B cell (primary cell): ENCODE measurements at regions of chr20 and their contacts with region 1.

Region 1: DNA sequence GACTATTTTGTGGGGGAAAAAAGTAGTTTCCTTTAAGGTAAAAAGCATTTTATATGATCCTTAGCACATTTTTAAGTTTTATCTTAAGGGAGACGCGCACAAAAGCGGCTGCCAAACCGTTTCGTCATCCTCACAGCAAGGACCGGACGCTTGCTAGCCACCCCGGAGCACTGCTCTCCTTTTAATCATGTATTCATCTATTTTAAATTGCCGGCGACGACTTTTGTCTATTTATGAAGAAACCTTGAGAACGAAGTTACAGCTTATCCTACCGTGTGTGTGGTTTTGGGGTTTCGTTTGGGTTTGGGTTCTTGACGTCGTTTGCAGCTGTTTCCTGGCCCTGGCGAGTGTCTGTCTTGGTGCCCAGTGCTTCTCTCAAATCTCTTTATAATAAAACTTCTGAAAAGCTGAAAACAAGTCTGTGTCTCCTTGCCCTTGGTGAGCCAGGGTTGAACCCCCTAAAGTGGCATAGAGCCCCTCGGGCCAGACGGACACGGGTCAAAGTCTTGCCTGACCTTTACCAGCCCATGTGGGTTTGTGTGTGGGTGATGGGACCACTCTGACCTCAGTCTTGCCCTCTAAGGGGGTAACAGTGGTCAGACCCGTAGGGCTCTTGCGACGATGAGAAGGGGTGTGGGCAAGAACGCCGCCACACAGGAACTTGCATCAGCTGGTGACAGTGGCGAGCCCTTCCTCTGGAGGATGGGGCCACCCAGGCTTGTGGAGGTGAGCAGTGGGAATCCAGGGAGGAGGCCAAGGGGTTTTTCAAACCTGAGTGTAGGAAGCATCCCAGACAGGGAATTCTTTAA is 117.6 kb downstream of the JPH2 start:
- DNase-seq: peak; percentile 65
- ATAC-seq: peak; percentile 69
- H3K4me3 ChIP-seq: peak overlapping the region; percentile 8 to 56 (median 24)
- H3K4me3 Mint-ChIP-seq: peak overlapping the region; percentile 79
- H3K27ac ChIP-seq: peak overlapping the region; percentile 38 to 64
- H3K27ac Mint-ChIP-seq: peak overlapping the region; percentile 90
- H3K4me1 ChIP-seq: peaks cover 24 to 49% of the 10 kb centered on the region in 2 donors
- H3K4me1 Mint-ChIP-seq: peaks cover 48% of the 10 kb centered on the region
- H3K27me3 ChIP-seq: peaks cover 0 to 2% (median 0%) of the 10 kb centered on the region in 4 experiments
- H3K27me3 Mint-ChIP-seq: no peaks in the 10 kb centered on the region
- CTCF ChIP-seq: no peak

Region 2: DNA sequence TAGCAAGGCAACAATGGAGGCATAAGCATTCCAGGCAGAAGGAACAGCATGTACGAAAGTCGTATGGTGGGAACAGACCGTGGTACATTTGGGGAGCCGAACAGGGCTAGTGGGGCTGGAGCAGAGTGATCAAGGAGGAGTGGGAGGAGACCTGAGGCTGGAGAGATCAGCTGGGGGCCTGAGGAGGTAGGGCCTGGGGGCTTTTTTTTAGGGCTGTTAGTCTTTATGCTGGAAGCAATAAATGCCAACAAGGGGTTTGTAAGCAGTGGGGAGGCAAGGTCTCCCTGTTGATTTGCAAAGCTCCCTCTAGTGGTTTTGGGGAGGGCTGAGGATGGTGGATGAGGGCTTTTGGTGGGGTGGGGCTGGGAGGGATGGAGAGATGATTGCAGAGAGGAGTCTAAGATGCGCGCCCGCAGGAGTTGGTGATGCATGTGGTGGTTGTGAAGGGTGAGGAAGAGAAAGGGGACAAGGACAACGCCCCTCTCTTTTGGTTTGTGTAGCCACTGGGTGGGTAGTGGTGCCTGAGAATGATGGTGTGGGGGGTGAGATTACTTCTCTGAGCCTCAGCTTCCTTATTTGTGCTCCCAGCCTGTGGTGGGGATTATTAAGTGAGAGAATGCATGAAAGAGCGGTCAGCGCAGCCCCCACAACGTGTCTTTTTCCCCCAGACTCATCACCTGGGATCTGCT is 228.9 kb before region 1 on chr20:
- CTCF ChIA-PET with region 1: no interaction called
- POLR2A ChIA-PET with region 1: no interaction called
- intact Hi-C with region 1: loop called (anchors 5 kb)
- DNase-seq: peak; percentile 34
- ATAC-seq: peak; percentile 56
- H3K4me3 ChIP-seq: no peak overlapping the region
- H3K4me3 Mint-ChIP-seq: no peak overlapping the region
- H3K27ac ChIP-seq: no peak overlapping the region
- H3K27ac Mint-ChIP-seq: no peak overlapping the region
- H3K4me1 ChIP-seq: no peaks in the 10 kb centered on the region
- H3K4me1 Mint-ChIP-seq: peaks cover 8% of the 10 kb centered on the region
- H3K27me3 ChIP-seq: no peaks in the 10 kb centered on the region
- H3K27me3 Mint-ChIP-seq: no peaks in the 10 kb centered on the region
- CTCF ChIP-seq: peak; percentile 25

Region 3: DNA sequence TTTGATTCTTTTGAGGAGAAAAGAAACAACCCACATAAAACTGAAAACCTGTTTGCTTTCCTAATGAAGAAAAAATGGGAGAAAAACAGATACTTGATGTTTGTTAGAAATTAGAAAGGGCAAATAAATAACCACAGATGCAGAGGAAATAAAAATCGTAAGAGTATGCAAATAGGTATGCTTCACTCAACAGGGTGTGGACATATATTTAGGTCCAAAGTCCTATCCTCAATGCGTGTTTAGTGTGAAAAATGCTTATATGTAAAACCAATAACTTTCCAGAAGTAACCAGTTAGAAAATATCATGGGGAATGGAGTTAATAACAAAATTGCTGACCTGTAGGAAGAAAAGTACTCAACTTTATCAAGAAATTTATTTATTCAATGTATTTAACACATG is 19.1 kb before region 1 on chr20:
- CTCF ChIA-PET with region 1: no interaction called
- POLR2A ChIA-PET with region 1: no interaction called
- intact Hi-C with region 1: no loop called
- DNase-seq: no peak
- ATAC-seq: no peak
- H3K4me3 ChIP-seq: no peak overlapping the region
- H3K4me3 Mint-ChIP-seq: no peak overlapping the region
- H3K27ac ChIP-seq: no peak overlapping the region
- H3K27ac Mint-ChIP-seq: no peak overlapping the region
- H3K4me1 ChIP-seq: no peaks in the 10 kb centered on the region
- H3K4me1 Mint-ChIP-seq: no peaks in the 10 kb centered on the region
- H3K27me3 ChIP-seq: no peaks in the 10 kb centered on the region
- H3K27me3 Mint-ChIP-seq: peaks cover 6% of the 10 kb centered on the region
- CTCF ChIP-seq: no peak

Region 4: GRCh38 chr20:44080646-44081267 is 11.3 kb after region 1 on chr20:
- CTCF ChIA-PET with region 1: interaction called, 35 read pairs
- POLR2A ChIA-PET with region 1: interaction called, 3 read pairs
- intact Hi-C with region 1: loop called (anchors 1 kb)
- DNase-seq: peak; percentile 81
- ATAC-seq: peak; percentile 97
- H3K4me3 ChIP-seq: no peak overlapping the region
- H3K4me3 Mint-ChIP-seq: no peak overlapping the region
- H3K27ac ChIP-seq: no peak overlapping the region
- H3K27ac Mint-ChIP-seq: peak overlapping the region; percentile 26
- H3K4me1 ChIP-seq: no peaks in the 10 kb centered on the region
- H3K4me1 Mint-ChIP-seq: peaks cover 8% of the 10 kb centered on the region
- H3K27me3 ChIP-seq: no peaks in the 10 kb centered on the region
- H3K27me3 Mint-ChIP-seq: no peaks in the 10 kb centered on the region
- CTCF ChIP-seq: peak; percentile 99